ENCODE measurements at regions of chr1 and their contacts with region 1.

Region 1: GRCh38 chr1:179293340-179294327 is at the start of gene SOAT1:
- DNase-seq: peak; percentile 97
- H3K4me3 ChIP-seq: peak within 1 kb of the TSS; percentile 80
- H3K27ac ChIP-seq: peak within 1 kb of the TSS; percentile 63
- H3K4me1 ChIP-seq: peaks cover 42% of the 10 kb centered on the region
- CTCF ChIP-seq: 0 out of 2 replicates have a peak, but pooled peaks have one; percentile 10
- total RNA-seq, gene SOAT1: 8.7 and 11.1 TPM in 2 replicates

Region 2: GRCh38 chr1:179121159-179121938 is 172.3 kb before region 1 on chr1:
- CTCF ChIA-PET with region 1: interaction called, 3 read pairs
- POLR2A ChIA-PET with region 1: no interaction called
- intact Hi-C with region 1: loop called (anchors 1 kb)
- DNase-seq: peak; percentile 63
- H3K4me3 ChIP-seq: no peak overlapping the region
- H3K27ac ChIP-seq: no peak overlapping the region
- H3K4me1 ChIP-seq: no peaks in the 10 kb centered on the region
- CTCF ChIP-seq: peak; percentile 88

Region 3: DNA sequence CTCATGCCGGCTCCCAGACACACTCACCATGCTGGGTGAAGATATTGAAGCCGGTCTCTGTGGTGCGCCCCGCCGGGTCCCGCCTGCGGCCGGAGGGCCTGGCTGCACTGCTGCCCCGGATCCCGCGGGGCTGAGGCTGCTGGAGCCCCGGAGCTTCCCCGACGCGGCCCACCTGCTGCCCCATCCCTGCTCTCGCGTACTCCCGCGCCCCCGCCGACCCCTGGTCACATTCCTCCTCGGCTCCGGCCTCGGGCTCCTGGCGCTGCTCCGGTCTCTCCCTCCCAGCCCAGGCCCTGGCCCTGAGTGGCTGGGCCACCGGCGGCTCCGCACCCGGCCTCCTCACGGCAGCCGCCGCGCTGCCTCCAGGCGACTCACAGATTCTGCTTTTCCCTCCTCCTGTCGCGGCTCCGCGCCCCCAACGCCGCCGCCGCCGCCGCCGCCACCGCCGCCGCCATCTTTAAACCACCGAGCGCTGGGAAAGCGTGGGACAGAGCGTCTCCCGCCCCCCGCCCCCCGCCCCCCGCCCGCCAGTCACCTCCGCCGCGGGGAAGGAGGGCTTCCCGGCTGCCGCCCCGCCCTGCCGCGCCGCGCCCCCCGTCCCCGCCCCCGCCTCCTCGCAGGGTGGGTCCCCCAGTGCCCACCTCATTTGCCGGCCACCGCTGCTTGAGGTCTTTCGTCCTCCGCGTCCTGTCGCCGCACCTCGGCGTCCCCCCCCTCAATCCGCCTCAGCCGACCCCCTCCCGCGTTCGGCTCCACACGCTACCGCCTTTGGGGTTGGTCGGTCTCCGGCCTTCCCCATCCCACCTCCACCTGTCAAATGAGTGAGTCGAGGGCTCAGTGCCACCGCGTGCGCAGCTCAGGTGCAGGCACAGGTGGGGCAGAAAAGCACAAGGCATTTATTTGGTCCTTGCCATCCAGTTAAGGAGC is 64.2 kb before region 1 on chr1 and contains the start of gene ABL2:
- CTCF ChIA-PET with region 1: no interaction called
- POLR2A ChIA-PET with region 1: interaction called, 4 read pairs
- intact Hi-C with region 1: loop called (anchors 5 kb)
- DNase-seq: peak; percentile 65
- H3K4me3 ChIP-seq: peak within 1 kb of the TSS; percentile 93
- H3K27ac ChIP-seq: peak within 1 kb of the TSS; percentile 59
- H3K4me1 ChIP-seq: peaks cover 20% of the 10 kb centered on the region
- CTCF ChIP-seq: no peak
- total RNA-seq, gene ABL2: 7.3 and 7.9 TPM in 2 replicates

Region 4: DNA sequence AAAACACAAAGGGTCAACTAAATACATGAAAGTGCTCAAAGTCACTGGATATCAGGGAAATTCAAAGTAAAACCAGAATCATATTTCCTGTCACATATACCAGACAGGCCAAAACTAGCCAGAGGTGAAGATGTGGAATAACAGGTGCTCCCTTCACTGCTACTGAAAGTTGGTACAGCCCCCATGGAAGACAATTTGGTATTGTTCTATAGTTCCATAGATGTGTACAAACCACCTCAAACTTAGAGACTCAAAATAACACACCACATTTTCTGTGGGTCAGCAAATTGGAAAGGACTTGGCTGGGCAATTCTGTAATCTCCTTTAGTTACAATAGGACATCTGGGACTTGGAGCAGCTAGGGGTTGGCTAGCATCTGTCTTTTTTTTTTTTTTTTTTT is 24.6 kb before region 1 on chr1:
- CTCF ChIA-PET with region 1: no interaction called
- POLR2A ChIA-PET with region 1: no interaction called
- intact Hi-C with region 1: no loop called
- DNase-seq: no peak
- H3K4me3 ChIP-seq: no peak overlapping the region
- H3K27ac ChIP-seq: no peak overlapping the region
- H3K4me1 ChIP-seq: no peaks in the 10 kb centered on the region
- CTCF ChIP-seq: no peak

Measured in OCI-LY7 (cell line).